ENCODE measurements at regions of chr4 and their contacts with region 1.

Region 1: GRCh38 chr4:88446124-88446523 is 10.8 kb upstream of the HERC5 start:
- DNase-seq: no peak
- H3K4me3 ChIP-seq: no peak overlapping the region
- H3K27ac ChIP-seq: no peak overlapping the region
- H3K4me1 ChIP-seq: no peaks in the 10 kb centered on the region
- H3K27me3 ChIP-seq: no peaks in the 10 kb centered on the region

Region 2: DNA sequence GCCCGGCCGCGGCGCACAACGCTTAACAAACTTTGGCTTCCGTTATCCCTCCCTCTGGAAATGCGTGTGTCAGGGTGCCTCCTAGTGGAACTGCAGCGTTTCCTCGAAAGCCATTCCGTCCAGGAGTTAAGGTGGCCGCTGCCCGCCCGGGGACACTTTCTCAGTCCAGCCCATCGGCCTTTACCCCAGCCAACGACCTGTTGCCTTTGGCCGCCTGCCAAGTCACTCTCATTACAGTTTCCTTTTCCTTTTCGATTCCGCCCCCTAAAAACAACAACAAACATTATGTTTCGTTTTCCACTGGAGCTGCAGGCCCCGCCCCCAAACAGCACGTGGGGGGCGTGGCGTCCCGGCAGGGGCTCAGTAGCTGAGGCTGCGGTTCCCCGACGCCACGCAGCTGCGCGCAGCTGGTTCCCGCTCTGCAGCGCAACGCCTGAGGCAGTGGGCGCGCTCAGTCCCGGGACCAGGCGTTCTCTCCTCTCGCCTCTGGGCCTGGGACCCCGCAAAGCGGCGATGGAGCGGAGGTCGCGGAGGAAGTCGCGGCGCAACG is 10.7 kb after region 1 on chr4 and contains the start of gene HERC5:
- CTCF ChIA-PET with region 1: interaction called, 20 read pairs
- POLR2A ChIA-PET with region 1: no interaction called
- DNase-seq: peak; percentile 95 to 97 (median 97)
- H3K4me3 ChIP-seq: peak within 1 kb of the TSS; percentile 65 to 97 (median 84)
- H3K27ac ChIP-seq: peak within 1 kb of the TSS in 1 of 2 experiments; percentile 51
- H3K4me1 ChIP-seq: peaks cover 5 to 23% (median 12%) of the 10 kb centered on the region in 4 experiments
- H3K27me3 ChIP-seq: peaks cover 0 to 3% (median 0%) of the 10 kb centered on the region in 5 experiments

Measured in common myeloid progenitor, CD34-positive (primary cell).